Activated CD8-positive, alpha-beta T cell treated with anti-CD3 and anti-CD28 coated beads for 36 hours (primary cell): ENCODE measurements at regions of chr5 and their contacts with region 1.

Region 1: DNA sequence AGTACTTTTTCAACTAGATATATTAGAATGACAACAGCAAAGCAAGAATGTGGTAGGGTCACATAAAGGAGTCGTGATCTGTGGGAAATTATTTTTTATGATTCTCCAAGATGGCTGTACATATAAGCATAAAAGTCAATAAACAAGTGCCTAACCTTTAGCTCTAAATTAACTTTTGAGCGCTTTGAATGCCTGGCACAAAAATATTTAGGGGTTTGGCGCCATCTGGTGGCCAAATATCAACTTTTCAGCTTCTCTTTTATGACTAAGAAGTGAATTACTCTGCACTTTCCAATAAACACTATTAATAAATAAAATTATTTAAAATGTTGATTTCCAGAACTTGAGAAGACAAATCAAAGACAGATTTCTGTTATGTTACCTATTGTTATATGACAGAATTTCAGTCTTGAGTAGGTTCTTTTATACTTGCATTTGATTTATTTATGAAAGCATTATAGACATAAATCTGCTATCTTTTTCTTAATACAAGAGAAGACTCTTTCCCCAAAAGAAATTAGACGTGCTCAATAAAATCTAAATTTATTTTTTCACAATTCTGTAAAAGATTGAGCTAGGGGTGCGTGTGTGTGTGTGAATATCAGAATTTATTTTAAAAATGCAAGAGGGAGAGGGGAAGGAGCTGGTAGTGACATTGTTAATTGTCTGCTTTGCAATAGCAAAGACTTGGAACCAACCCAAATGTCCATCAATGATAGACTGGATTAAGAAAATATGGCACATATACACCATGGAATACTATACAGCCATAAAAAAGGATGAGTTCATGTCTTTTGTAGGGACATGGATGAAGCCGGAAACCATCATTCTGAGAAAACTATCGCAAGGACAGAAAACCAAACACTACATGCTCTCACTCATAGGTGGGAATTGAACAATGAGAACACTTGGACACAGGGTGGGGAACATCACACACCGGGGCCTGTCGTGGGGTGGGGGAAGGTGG is 36.7 kb upstream of the ARRDC3 start:
- DNase-seq: peak; percentile 84
- ATAC-seq: peak; percentile 24
- H3K4me3 Mint-ChIP-seq: no peak overlapping the region
- H3K27ac Mint-ChIP-seq: no peak overlapping the region
- H3K4me1 Mint-ChIP-seq: peaks cover 18% of the 10 kb centered on the region
- H3K27me3 Mint-ChIP-seq: no peaks in the 10 kb centered on the region
- CTCF ChIP-seq: peak; percentile 89

Region 2: GRCh38 chr5:90866333-90866732 is 553.5 kb before region 1 on chr5:
- CTCF ChIA-PET with region 1: interaction called, 31 read pairs
- POLR2A ChIA-PET with region 1: no interaction called
- intact Hi-C with region 1: loop called (anchors 5 kb)
- DNase-seq: no peak
- ATAC-seq: peak; percentile 49
- H3K4me3 Mint-ChIP-seq: no peak overlapping the region
- H3K27ac Mint-ChIP-seq: no peak overlapping the region
- H3K4me1 Mint-ChIP-seq: peaks cover 13% of the 10 kb centered on the region
- H3K27me3 Mint-ChIP-seq: peaks cover 6% of the 10 kb centered on the region
- CTCF ChIP-seq: peak; percentile 52

Region 3: GRCh38 chr5:91101600-91102379 is 318.1 kb before region 1 on chr5:
- CTCF ChIA-PET with region 1: interaction called, 21 read pairs
- POLR2A ChIA-PET with region 1: no interaction called
- intact Hi-C with region 1: loop called (anchors 10 kb)
- DNase-seq: peak; percentile 70
- ATAC-seq: peak; percentile 99
- H3K4me3 Mint-ChIP-seq: no peak overlapping the region
- H3K27ac Mint-ChIP-seq: no peak overlapping the region
- H3K4me1 Mint-ChIP-seq: no peaks in the 10 kb centered on the region
- H3K27me3 Mint-ChIP-seq: no peaks in the 10 kb centered on the region
- CTCF ChIP-seq: peak; percentile 63

Region 4: DNA sequence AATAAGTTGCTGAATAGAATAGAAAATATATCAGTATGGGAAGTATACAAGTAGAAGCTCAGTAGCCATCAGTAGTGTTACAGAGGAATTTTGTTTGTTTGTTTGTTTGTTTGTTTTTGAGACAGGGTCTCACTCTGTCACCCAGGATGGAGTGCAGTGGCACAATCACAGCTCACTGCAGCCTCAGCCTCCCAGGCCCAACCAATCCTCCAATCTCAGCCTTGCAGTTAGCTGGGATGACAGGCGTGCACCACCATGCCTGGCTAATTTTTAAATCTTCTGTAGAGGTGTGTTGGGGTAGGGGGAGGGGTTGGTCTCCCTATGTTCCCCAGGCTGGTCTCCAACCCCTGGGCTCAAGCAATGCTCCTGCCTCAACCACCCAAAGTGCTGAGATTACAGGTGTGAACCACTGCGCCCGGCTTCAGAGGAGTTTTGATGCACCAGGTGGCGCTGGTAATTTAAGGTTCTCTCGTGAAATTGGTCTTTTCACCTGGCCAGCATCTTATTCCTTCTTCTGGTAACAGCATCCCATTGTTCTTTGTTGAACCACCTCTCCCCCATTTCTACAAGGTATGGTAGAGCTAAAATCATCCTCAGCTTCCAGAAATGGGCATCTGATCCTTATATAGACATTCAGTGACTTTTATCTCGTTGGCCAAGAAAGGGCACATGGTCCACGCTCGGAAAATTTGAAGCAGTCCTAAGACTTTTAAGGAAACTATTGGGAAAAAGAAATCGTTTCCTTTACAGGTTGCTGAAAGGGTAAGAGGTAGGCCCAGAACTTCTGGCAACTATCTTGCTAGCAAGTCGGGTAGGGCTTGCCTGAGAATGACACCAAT is 193.8 kb before region 1 on chr5:
- CTCF ChIA-PET with region 1: interaction called, 45 read pairs
- POLR2A ChIA-PET with region 1: no interaction called
- intact Hi-C with region 1: no loop called
- DNase-seq: peak; percentile 82
- ATAC-seq: peak; percentile 65
- H3K4me3 Mint-ChIP-seq: no peak overlapping the region
- H3K27ac Mint-ChIP-seq: no peak overlapping the region
- H3K4me1 Mint-ChIP-seq: no peaks in the 10 kb centered on the region
- H3K27me3 Mint-ChIP-seq: peaks cover 4% of the 10 kb centered on the region
- CTCF ChIP-seq: peak; percentile 73

Region 5: DNA sequence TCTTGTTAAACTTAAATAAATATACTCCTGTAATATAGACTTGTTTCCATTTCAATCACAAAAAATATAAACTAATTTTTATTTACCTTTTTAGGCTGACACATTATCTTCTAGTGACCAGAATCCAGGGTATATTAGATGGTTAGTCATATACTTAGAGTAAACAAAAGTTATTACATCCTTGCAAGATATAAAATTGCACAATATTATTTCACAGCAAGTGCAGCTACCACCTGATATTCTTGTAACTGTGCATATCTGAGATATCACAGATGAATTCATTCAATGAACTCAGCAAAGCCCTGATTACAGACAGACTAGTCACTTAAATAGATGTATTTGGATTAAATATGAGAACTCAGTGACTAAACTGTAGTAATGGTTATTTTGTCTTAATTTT is 11.1 kb before region 1 on chr5:
- CTCF ChIA-PET with region 1: interaction called, 50 read pairs
- POLR2A ChIA-PET with region 1: no interaction called
- intact Hi-C with region 1: no loop called
- DNase-seq: no peak
- ATAC-seq: no peak
- H3K4me3 Mint-ChIP-seq: no peak overlapping the region
- H3K27ac Mint-ChIP-seq: no peak overlapping the region
- H3K4me1 Mint-ChIP-seq: no peaks in the 10 kb centered on the region
- H3K27me3 Mint-ChIP-seq: no peaks in the 10 kb centered on the region
- CTCF ChIP-seq: no peak

Region 6: GRCh38 chr5:91441082-91441481 is 21.2 kb after region 1 on chr5:
- CTCF ChIA-PET with region 1: interaction called, 27 read pairs
- POLR2A ChIA-PET with region 1: no interaction called
- intact Hi-C with region 1: no loop called
- DNase-seq: no peak
- ATAC-seq: no peak
- H3K4me3 Mint-ChIP-seq: no peak overlapping the region
- H3K27ac Mint-ChIP-seq: no peak overlapping the region
- H3K4me1 Mint-ChIP-seq: peaks cover 6% of the 10 kb centered on the region
- H3K27me3 Mint-ChIP-seq: no peaks in the 10 kb centered on the region
- CTCF ChIP-seq: no peak

Region 7: DNA sequence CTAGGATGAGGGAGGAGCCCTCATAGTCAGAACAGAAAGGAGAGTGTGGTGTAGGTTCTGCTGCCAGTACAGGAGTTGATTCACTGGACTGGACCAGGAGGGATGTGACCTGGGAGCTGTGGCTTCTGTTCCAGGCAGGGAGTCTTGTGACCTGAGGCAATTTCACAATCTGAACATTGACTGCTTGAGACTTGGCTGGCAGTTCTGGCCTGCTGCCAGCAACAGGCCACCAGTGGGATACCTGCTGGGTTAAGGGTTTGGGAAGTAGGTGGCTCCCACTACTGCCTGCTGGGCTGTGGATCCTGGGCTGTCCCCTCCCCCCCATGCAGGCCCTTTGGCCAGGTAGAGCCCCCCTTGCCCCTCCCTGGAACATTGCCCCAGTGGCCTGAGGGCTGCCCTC is 231.8 kb after region 1 on chr5:
- CTCF ChIA-PET with region 1: no interaction called
- POLR2A ChIA-PET with region 1: no interaction called
- intact Hi-C with region 1: no loop called
- DNase-seq: no peak
- ATAC-seq: no peak
- H3K4me3 Mint-ChIP-seq: no peak overlapping the region
- H3K27ac Mint-ChIP-seq: no peak overlapping the region
- H3K4me1 Mint-ChIP-seq: no peaks in the 10 kb centered on the region
- H3K27me3 Mint-ChIP-seq: no peaks in the 10 kb centered on the region
- CTCF ChIP-seq: no peak